ENCODE measurements at regions of chr9 and their contacts with region 1.

Region 1: GRCh38 chr9:134449221-134449894 is 123.1 kb downstream of the RXRA start:
- DNase-seq: peak; percentile 76 to 94
- ATAC-seq: peak; percentile 99 to 100 (median 100)
- H3K4me3 ChIP-seq: no peak overlapping the region
- H3K4me3 Mint-ChIP-seq: no peak overlapping the region
- H3K27ac ChIP-seq: no peak overlapping the region
- H3K27ac Mint-ChIP-seq: peak overlapping the region in 1 of 2 donors; percentile 24
- H3K4me1 ChIP-seq: peaks cover 6% of the 10 kb centered on the region
- H3K4me1 Mint-ChIP-seq: peaks cover 6 to 16% of the 10 kb centered on the region in 2 donors
- H3K27me3 ChIP-seq: no peaks in the 10 kb centered on the region
- H3K27me3 Mint-ChIP-seq: peaks cover 0 to 3% of the 10 kb centered on the region in 2 donors
- CTCF ChIP-seq: peak; percentile 83

Region 2: GRCh38 chr9:134492281-134492691 is 42.9 kb after region 1 on chr9:
- intact Hi-C with region 1: no loop called
- DNase-seq: no peak
- ATAC-seq: no peak
- H3K4me3 ChIP-seq: no peak overlapping the region
- H3K4me3 Mint-ChIP-seq: no peak overlapping the region
- H3K27ac ChIP-seq: no peak overlapping the region
- H3K27ac Mint-ChIP-seq: no peak overlapping the region
- H3K4me1 ChIP-seq: peaks cover 3% of the 10 kb centered on the region
- H3K4me1 Mint-ChIP-seq: no peaks in the 10 kb centered on the region
- H3K27me3 ChIP-seq: no peaks in the 10 kb centered on the region
- H3K27me3 Mint-ChIP-seq: peaks cover 0 to 16% of the 10 kb centered on the region in 2 donors
- CTCF ChIP-seq: no peak

Region 3: GRCh38 chr9:134592018-134592818 is 142.9 kb after region 1 on chr9:
- intact Hi-C with region 1: loop called (anchors 10 kb)
- DNase-seq: no peak
- ATAC-seq: no peak
- H3K4me3 ChIP-seq: no peak overlapping the region
- H3K4me3 Mint-ChIP-seq: no peak overlapping the region
- H3K27ac ChIP-seq: no peak overlapping the region
- H3K27ac Mint-ChIP-seq: no peak overlapping the region
- H3K4me1 ChIP-seq: no peaks in the 10 kb centered on the region
- H3K4me1 Mint-ChIP-seq: no peaks in the 10 kb centered on the region
- H3K27me3 ChIP-seq: no peaks in the 10 kb centered on the region
- H3K27me3 Mint-ChIP-seq: peaks cover 0 to 8% of the 10 kb centered on the region in 2 donors
- CTCF ChIP-seq: no peak

Region 4: DNA sequence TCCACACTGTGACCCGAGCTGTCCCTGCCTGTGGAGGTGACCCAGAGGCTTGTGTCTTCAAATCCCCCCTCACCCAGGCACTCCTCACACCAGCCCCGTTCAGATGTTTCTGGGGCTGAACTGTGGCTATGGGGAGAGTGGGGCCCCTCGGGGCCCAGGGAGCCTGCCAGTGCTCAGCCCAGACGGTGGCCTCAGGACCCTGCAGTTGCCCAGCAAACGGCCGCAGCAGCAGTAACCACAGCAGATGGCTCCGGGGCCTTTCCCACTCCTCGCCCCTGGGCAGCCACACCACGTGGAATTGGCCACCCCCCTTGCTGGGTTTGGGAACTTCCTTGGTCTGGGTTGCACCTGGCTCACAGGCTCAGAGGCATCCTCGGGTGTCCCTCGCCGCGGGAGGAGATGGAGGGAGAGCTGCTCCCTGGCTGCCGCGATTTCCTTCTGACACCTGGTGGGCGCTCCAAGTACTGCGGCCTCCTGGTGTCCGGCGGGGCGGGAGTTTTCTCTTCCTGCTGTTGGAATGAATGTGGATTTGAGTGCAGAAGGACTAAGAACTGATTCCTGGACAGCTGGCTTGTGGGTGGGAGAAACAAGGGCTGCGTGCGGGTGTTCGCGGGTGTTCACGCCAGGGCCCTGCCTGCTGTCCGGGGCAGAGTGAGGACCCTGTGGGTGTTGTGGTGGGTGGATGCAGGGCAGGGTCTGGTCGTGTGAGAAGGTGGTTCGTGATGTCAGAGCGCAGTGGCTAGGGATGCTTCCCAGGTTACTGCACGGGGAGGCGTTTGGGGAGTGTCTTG is 289.7 kb after region 1 on chr9:
- intact Hi-C with region 1: loop called (anchors 1 kb)
- DNase-seq: peak; percentile 34 to 52
- ATAC-seq: peak in 1 of 3 donors; percentile 51
- H3K4me3 ChIP-seq: no peak overlapping the region
- H3K4me3 Mint-ChIP-seq: no peak overlapping the region
- H3K27ac ChIP-seq: no peak overlapping the region
- H3K27ac Mint-ChIP-seq: no peak overlapping the region
- H3K4me1 ChIP-seq: no peaks in the 10 kb centered on the region
- H3K4me1 Mint-ChIP-seq: no peaks in the 10 kb centered on the region
- H3K27me3 ChIP-seq: no peaks in the 10 kb centered on the region
- H3K27me3 Mint-ChIP-seq: peaks cover 4 to 7% of the 10 kb centered on the region in 2 donors
- CTCF ChIP-seq: peak; percentile 59

Region 5: DNA sequence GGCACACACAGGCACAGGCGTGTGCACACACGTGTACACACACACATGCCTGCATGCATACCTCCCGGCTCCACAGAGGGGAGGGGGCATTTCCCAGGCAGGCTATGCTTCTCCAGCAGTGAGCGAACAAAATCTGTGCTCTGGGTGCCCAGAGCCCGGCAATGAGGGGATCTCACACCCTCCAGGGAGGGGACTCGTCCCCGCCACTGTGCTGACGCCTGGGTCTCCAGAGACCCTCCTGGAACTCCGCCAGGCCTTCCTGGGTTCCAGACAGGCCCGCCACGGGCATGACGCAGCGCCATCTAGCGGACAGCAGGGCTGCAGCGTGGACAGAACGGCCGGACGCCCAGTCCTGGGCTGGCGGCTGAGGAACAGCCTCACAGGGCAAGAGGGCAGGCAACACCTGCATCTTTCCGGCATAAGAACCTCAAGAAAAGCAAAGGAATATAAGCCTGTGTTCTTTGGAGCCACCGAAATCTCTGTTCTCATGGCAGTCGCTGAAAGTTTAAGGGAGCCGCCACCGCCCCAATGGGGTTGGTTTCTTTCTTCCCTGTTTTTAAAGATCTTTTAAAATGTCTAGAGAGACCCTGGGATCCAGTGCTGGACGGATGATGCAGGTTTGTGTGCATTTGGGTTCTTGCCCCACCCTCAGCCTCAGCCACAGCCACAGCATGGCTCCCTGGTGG is 894.6 kb after region 1 on chr9:
- intact Hi-C with region 1: loop called (anchors 2 kb)
- DNase-seq: peak; percentile 35 to 60
- ATAC-seq: peak in 2 of 3 donors; percentile 43 to 70
- H3K4me3 ChIP-seq: no peak overlapping the region
- H3K4me3 Mint-ChIP-seq: no peak overlapping the region
- H3K27ac ChIP-seq: no peak overlapping the region
- H3K27ac Mint-ChIP-seq: no peak overlapping the region
- H3K4me1 ChIP-seq: no peaks in the 10 kb centered on the region
- H3K4me1 Mint-ChIP-seq: no peaks in the 10 kb centered on the region
- H3K27me3 ChIP-seq: no peaks in the 10 kb centered on the region
- H3K27me3 Mint-ChIP-seq: no peaks in the 10 kb centered on the region
- CTCF ChIP-seq: peak; percentile 76

Measured in natural killer cell (primary cell).